K562 (cell line): ENCODE measurements at regions of chr2 and their contacts with region 1.

Region 1: GRCh38 chr2:223041527-223042109 is 10.4 kb upstream of the KCNE4 start:
- DNase-seq: peak; percentile 65 to 84 (median 68)
- ATAC-seq: peak; percentile 83
- H3K4me3 ChIP-seq: no peak overlapping the region
- H3K27ac ChIP-seq: peak overlapping the region; percentile 43; the same call in 2 of the 3 replicates
- H3K4me1 ChIP-seq: peaks cover 20 to 54% of the 10 kb centered on the region in 2 experiments; a peak in 4 of 5 replicates
- H3K27me3 ChIP-seq: no peaks in the 10 kb centered on the region
- CTCF ChIP-seq: no peak
- EP300 ChIP-seq: no peak
- POLR2A ChIP-seq: no peak
- RAD21 ChIP-seq: no peak

Region 2: GRCh38 chr2:222982010-222982908 is 59.4 kb before region 1 on chr2:
- CTCF ChIA-PET with region 1: no interaction called
- POLR2A ChIA-PET with region 1: no interaction called
- in situ Hi-C with region 1: no loop called
- intact Hi-C with region 1: loop called (anchors 5 kb)
- DNase-seq: peak in 2 of 4 experiments; percentile 21 to 56
- ATAC-seq: peak; percentile 99
- H3K4me3 ChIP-seq: no peak overlapping the region
- H3K27ac ChIP-seq: no peak overlapping the region; the same call in 2 of the 3 replicates
- H3K4me1 ChIP-seq: peaks cover 0 to 6% of the 10 kb centered on the region in 2 experiments; a peak in 1 of 5 replicates
- H3K27me3 ChIP-seq: no peaks in the 10 kb centered on the region
- CTCF ChIP-seq: peak; percentile 58 to 69 (median 58)
- EP300 ChIP-seq: peak; percentile 61; the same call in 1 of the 2 replicates
- POLR2A ChIP-seq: no peak
- RAD21 ChIP-seq: peak; percentile 85 to 93